HepG2 (cell line): ENCODE measurements at regions of chr13 and their contacts with region 1.

Region 1: DNA sequence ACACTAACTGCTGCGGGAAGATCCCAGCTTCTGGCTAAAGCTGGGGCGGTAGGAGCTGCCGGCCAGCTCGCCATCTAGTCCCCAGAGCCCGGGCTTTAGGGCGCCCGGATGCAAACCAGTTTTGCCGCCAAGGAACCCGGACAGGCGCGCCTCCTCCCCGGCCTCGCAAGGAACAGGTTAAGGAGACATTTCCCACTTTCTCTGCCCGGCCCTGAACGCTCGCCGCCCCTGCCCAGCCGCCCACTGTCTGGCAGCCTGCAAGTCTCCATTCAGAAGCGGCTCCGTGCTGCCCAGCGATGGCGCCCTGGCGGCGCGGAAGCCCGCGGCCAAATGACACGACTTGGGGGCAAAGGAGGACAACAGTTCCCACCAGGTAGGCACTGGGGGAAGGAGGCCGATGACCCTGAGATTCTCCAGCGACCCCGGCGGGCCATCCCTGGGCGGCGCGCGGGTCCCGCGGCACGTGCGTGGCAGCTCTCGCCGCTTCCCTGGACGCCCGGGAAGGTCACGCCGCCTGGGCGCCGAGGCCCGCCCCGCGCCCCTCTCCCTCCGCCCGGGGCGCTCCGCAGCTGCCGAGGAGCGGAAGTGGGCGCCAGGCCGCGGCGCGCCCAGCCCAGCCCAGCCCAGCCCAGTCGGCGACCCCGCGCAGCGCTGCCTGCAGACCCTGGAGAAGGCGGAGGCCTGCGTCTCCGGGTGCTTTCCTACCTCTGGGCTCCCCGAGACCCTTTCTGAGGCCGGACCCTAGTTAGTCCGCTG is 42.2 kb upstream of the HNRNPA1L2 start:
- DNase-seq: no peak
- ATAC-seq: peak; percentile 78
- H3K4me3 ChIP-seq: peak overlapping the region; percentile 64 to 69 (median 64); a peak in 5 of 6 replicates
- H3K27ac ChIP-seq: peak overlapping the region; percentile 82
- H3K4me1 ChIP-seq: peaks cover 40% of the 10 kb centered on the region
- H3K27me3 ChIP-seq: no peaks in the 10 kb centered on the region; a peak in 1 of 5 replicates
- CTCF ChIP-seq: peak; percentile 25; the same call in 1 of the 2 replicates
- EP300 ChIP-seq: no peak
- POLR2A ChIP-seq: peak; percentile 45 to 63
- RAD21 ChIP-seq: no peak; the same call in 1 of the 2 replicates

Region 2: GRCh38 chr13:52652196-52652979 is 52.4 kb after region 1 on chr13 and contains the start of gene SUGT1:
- CTCF ChIA-PET with region 1: no interaction called
- POLR2A ChIA-PET with region 1: interaction called, 16 read pairs
- in situ Hi-C with region 1: loop called (anchors 10 kb)
- intact Hi-C with region 1: no loop called
- DNase-seq: peak; percentile 94
- ATAC-seq: peak; percentile 98
- H3K4me3 ChIP-seq: peak within 1 kb of the TSS; percentile 90 to 95 (median 92)
- H3K27ac ChIP-seq: peak within 1 kb of the TSS; percentile 100
- H3K4me1 ChIP-seq: peaks cover 43% of the 10 kb centered on the region
- H3K27me3 ChIP-seq: no peaks in the 10 kb centered on the region; a peak in 1 of 5 replicates
- CTCF ChIP-seq: peak; percentile 70
- EP300 ChIP-seq: no peak
- POLR2A ChIP-seq: peak; percentile 91 to 93
- RAD21 ChIP-seq: no peak; the same call in 1 of the 2 replicates
- total RNA-seq, gene SUGT1: 71.2 and 113 TPM in 2 replicates

Region 3: DNA sequence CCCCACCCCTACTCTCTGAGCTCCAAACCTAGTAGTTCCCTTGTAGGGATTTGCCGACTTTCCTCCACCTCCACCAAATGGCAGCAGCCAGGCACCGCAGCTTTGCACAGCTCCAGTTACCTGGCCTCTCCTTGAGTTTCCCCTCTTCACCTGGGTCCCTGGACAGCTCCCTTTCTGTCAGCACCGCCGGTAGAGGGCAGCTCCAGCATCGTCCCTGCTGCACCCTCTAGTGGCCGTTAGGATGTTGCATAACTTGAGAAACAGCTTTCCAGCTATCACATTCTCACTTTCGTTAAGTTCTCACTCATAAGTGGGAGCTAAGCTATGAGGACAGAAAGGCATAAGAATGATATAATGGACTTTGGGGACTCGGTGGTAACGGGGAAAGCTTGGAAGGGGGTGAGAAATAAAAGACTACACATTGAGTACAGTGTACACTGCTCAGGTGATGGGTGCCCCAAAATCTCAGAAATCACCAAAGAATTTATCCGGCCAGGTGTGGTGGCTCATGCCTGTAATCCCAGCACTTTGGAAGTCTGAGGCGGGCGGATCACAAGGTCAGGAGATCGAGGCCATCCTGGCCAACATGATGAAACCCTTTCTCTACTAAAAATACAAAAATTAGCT is 368.2 kb after region 1 on chr13:
- CTCF ChIA-PET with region 1: no interaction called
- POLR2A ChIA-PET with region 1: no interaction called
- in situ Hi-C with region 1: loop called (anchors 10 kb)
- intact Hi-C with region 1: no loop called
- DNase-seq: peak; percentile 60
- ATAC-seq: peak; percentile 100
- H3K4me3 ChIP-seq: no peak overlapping the region
- H3K27ac ChIP-seq: no peak overlapping the region
- H3K4me1 ChIP-seq: no peaks in the 10 kb centered on the region
- H3K27me3 ChIP-seq: no peaks in the 10 kb centered on the region; a peak in 1 of 5 replicates
- CTCF ChIP-seq: peak; percentile 93
- EP300 ChIP-seq: no peak
- POLR2A ChIP-seq: no peak
- RAD21 ChIP-seq: peak; percentile 65

Region 4: GRCh38 chr13:53151336-53152056 is 551.5 kb after region 1 on chr13:
- CTCF ChIA-PET with region 1: no interaction called
- POLR2A ChIA-PET with region 1: no interaction called
- in situ Hi-C with region 1: loop called (anchors 25 kb)
- intact Hi-C with region 1: loop called (anchors 5 kb)
- DNase-seq: peak; percentile 43
- ATAC-seq: peak; percentile 81
- H3K4me3 ChIP-seq: no peak overlapping the region
- H3K27ac ChIP-seq: no peak overlapping the region
- H3K4me1 ChIP-seq: no peaks in the 10 kb centered on the region
- H3K27me3 ChIP-seq: no peaks in the 10 kb centered on the region
- CTCF ChIP-seq: peak; percentile 80
- EP300 ChIP-seq: no peak
- POLR2A ChIP-seq: no peak
- RAD21 ChIP-seq: peak; percentile 26; the same call in 1 of the 2 replicates